Activated CD8-positive, alpha-beta memory T cell treated with anti-CD3 and anti-CD28 coated beads, Interleukin-2, amount 10 ng/mL, durations not matched to agents 7 days and 5 days (primary cell): ENCODE measurements at regions of chr17 and their contacts with region 1.

Region 1: DNA sequence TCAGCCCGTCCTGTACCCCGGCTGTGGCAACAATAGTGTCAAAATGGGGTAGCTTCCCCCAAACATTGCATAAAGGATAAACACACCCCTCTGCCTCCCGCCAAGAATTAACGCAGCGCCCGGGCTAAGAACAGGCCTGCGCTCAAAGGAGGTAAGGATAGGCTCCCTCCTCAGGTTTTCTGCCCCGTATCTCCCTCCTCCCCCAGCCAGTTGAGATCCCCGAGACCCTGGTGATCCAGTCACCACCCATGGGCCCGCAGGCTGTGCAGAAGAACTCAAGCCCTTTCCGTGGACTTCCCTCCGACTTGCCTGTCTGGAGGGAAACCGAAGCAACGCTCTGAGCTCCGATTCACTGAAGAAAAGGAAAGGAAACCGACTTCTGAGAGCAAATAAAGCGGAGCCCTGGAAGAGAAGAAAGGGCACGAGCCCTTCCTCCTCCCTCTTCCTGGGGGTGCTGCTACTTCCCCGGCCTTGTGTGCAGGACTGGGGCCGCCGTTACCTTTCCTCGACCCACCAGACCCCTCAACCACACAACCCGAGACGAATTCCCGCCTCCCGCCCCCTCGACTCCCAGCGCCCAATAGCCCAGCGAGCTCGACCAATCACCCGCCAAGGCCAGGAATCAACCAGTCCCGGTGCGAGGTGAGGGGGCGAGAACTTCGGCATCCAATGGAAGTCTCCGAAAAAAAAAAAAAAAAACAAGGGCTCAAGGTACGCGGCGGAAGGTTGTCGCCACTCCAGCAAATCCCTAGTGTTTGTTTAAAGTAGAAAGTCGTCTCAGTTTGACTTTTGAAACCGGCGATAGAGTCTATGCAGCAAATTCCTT is at the start of gene BRIP1:
- DNase-seq: peak; percentile 96
- ATAC-seq: peak; percentile 97
- H3K4me3 Mint-ChIP-seq: peak within 1 kb of the TSS; percentile 97
- H3K27ac Mint-ChIP-seq: peak within 1 kb of the TSS; percentile 92
- H3K4me1 Mint-ChIP-seq: peaks cover 35% of the 10 kb centered on the region
- H3K27me3 Mint-ChIP-seq: no peaks in the 10 kb centered on the region
- total RNA-seq, gene BRIP1: 23.8 to 30.6 TPM

Region 2: DNA sequence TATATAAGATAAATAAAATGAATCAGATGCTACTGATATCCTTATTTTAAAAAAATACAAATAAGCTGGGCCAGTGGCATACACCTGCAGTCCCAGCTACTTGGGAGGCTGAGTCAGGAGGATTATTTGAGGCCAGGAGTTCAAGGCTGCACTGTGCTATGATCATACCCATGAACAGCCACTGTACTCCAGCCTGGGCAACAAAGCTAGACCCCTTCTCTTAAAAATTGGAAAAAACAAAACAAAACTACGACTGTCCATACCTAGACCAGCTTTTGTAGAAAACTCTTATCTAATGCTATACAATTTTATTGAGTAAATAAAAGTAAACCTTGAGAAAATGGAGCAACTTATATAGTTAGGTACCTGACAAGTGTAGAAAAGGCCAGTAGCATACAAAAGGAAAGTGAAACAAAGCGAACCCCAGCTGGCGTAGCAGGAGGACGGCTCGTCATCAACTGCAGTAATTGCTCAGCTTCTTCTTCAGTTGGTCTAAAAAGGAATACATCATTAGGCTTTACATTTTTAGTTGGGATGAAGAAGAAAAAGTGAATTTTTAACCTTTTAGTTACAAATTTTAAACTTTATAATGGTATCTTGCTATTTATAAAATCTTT is 41.0 kb after region 1 on chr17:
- CTCF ChIA-PET with region 1: interaction called, 14 read pairs
- DNase-seq: peak; percentile 80
- ATAC-seq: peak; percentile 97
- H3K4me3 Mint-ChIP-seq: peak overlapping the region; percentile 64
- H3K27ac Mint-ChIP-seq: peak overlapping the region; percentile 92
- H3K4me1 Mint-ChIP-seq: peaks cover 9% of the 10 kb centered on the region
- H3K27me3 Mint-ChIP-seq: no peaks in the 10 kb centered on the region

Region 3: DNA sequence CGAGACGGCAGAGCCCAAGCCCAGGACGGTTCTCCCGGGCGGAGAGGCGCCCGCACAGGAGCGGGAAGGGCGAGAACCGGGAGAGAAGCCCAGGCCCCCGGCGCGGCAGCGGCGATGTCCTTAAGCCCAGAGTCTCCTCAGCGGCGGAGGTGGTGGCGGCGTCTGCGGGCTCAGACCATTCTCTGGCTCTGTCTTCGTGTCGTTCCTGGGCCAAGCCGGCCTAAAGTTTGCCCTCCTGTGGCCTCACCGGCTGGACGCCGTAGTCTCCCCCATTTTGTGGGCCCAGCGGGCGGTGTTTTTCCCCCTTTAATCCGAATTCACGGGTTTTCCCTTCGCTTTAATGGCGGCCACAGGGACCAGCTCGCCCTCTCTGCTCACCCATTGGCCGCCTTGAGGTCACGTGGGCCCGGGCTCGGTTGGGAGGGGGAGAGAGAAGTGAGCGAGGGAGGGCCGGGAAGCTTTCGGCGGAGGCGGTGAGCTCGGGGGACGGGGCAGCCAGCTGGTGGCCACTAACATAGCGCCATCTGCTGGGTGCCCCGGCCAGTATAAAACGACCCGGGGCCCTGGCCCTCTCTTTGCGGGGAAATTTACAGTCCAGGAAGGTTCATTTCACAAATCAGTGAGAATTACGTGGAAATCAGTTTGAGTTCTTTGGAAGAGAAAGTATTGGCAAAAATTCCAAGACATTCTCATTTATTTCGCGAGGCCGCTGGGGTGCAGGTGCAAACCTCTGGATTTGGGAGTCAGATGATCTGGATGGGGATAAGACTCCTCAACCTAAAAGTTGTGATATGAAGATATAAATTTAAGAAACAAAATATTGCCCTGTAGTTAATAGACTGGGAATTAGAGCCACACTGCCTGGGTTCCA is 202.6 kb after region 1 on chr17:
- CTCF ChIA-PET with region 1: interaction called, 10 read pairs
- DNase-seq: peak; percentile 99
- ATAC-seq: peak; percentile 94
- H3K4me3 Mint-ChIP-seq: peak overlapping the region; percentile 96
- H3K27ac Mint-ChIP-seq: peak overlapping the region; percentile 98
- H3K4me1 Mint-ChIP-seq: peaks cover 28% of the 10 kb centered on the region
- H3K27me3 Mint-ChIP-seq: no peaks in the 10 kb centered on the region